Panc1 (cell line): ENCODE measurements at regions of chr5 and their contacts with region 1.

Region 1: DNA sequence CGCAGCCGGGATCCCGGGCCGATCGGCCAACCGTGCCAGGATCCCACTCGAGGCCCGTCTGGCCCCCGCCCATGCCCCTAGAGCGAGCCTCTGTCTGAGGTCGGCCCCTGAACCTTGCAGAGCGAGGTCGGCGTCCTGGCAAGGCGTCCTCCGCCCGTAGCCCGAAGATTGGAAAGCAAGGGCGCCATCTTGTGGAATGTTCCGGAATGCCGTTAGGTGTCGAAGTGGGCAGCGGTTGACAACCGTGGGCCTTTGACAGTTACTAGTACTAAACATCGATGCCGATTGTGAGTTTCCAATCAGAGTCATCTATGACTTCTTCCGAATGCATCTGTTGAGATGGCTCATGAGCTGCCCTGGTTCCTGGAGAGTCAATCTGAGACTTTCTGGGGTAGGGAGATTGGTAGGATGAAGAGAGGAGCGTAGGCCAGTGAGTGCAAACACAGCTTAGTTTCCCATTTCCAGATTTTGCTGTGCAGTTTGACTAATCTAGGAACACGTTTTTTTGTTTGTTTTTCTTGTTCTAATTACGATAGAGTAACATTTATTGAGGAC is 923 bp upstream of the PLK2 start:
- DNase-seq: peak; percentile 72
- ATAC-seq: peak; percentile 72
- H3K4me3 ChIP-seq: peak overlapping the region; percentile 87 to 91
- H3K27ac ChIP-seq: peak overlapping the region; percentile 97
- H3K4me1 ChIP-seq: peaks cover 24% of the 10 kb centered on the region
- H3K27me3 ChIP-seq: no peaks in the 10 kb centered on the region
- CTCF ChIP-seq: peak; percentile 84

Region 2: GRCh38 chr5:57298295-57298984 is 1162.4 kb before region 1 on chr5:
- CTCF ChIA-PET with region 1: no interaction called
- POLR2A ChIA-PET with region 1: no interaction called
- in situ Hi-C with region 1: no loop called
- intact Hi-C with region 1: loop called (anchors 1 kb)
- DNase-seq: peak; percentile 77
- ATAC-seq: peak; percentile 93
- H3K4me3 ChIP-seq: no peak overlapping the region
- H3K27ac ChIP-seq: peak overlapping the region; percentile 89
- H3K4me1 ChIP-seq: peaks cover 5% of the 10 kb centered on the region
- H3K27me3 ChIP-seq: no peaks in the 10 kb centered on the region
- CTCF ChIP-seq: peak; percentile 86

Region 3: DNA sequence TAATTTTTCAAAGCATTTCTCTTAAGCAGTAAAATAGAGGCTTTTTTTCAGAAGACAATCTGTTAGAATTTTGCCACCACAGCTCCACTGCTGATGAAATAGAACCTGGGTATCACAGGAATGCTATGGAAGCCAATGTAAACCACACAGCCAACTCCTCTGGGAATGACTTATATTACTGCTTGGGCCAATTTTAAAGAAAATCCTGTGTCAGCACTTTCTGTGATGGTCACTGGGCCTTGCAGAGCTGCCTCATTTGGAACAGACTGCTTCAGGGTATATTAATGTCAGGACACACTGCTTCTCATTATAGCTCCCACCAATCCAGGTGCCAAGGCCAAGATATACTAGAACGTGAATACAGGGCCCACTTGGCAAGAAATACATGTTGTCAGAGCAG is 834.1 kb before region 1 on chr5:
- CTCF ChIA-PET with region 1: no interaction called
- POLR2A ChIA-PET with region 1: no interaction called
- in situ Hi-C with region 1: no loop called
- intact Hi-C with region 1: no loop called
- DNase-seq: no peak
- ATAC-seq: no peak
- H3K4me3 ChIP-seq: no peak overlapping the region
- H3K27ac ChIP-seq: no peak overlapping the region
- H3K4me1 ChIP-seq: no peaks in the 10 kb centered on the region
- H3K27me3 ChIP-seq: no peaks in the 10 kb centered on the region
- CTCF ChIP-seq: no peak

Region 4: GRCh38 chr5:57692582-57693487 is 768.0 kb before region 1 on chr5:
- CTCF ChIA-PET with region 1: no interaction called
- POLR2A ChIA-PET with region 1: no interaction called
- in situ Hi-C with region 1: no loop called
- intact Hi-C with region 1: loop called (anchors 10 kb)
- DNase-seq: peak; percentile 95
- ATAC-seq: peak; percentile 99
- H3K4me3 ChIP-seq: peak overlapping the region; percentile 32 to 50
- H3K27ac ChIP-seq: peak overlapping the region; percentile 100
- H3K4me1 ChIP-seq: peaks cover 43% of the 10 kb centered on the region
- H3K27me3 ChIP-seq: no peaks in the 10 kb centered on the region
- CTCF ChIP-seq: no peak

Region 5: DNA sequence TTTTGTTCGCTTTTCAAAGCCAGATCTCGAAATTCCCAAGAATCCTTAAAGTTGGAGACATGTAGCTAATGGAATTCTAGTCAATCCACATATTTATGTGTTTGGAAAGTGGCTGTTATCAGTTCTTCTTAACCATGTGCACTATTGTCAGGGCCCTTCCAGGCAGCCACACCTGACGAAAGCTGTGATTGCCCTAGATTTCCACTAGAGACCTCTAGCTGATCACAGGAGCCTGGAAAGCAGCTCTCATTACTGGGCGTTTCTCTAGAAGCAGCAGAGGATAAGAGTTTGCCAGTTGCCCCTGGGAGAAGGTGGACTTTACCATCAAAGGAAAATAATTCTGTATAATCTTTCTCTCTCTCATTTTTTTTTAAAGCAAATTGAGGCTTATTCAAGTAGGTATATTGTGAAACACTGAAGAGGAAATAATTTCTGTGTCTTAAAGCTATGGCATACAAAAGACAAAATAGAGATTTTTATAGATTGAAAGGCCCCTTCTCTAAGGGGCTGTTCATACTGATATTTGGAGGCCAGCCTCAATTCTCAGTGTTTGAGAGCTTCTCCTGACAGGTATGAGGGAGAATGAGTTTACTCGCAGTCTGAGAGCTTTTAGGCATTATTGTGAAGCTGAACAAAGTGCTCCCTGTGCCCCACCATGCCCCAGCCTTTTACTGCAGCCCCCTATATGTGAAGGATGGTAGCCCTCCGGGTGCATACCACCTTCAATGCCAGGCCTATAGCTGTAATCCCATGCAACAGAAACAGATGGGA is 572.8 kb before region 1 on chr5:
- CTCF ChIA-PET with region 1: interaction called, 10 read pairs
- POLR2A ChIA-PET with region 1: interaction called, 5 read pairs
- in situ Hi-C with region 1: no loop called
- intact Hi-C with region 1: loop called (anchors 1 kb)
- DNase-seq: peak; percentile 27
- ATAC-seq: peak; percentile 89
- H3K4me3 ChIP-seq: no peak overlapping the region
- H3K27ac ChIP-seq: peak overlapping the region; percentile 95
- H3K4me1 ChIP-seq: peaks cover 31% of the 10 kb centered on the region
- H3K27me3 ChIP-seq: no peaks in the 10 kb centered on the region
- CTCF ChIP-seq: peak; percentile 90

Region 6: DNA sequence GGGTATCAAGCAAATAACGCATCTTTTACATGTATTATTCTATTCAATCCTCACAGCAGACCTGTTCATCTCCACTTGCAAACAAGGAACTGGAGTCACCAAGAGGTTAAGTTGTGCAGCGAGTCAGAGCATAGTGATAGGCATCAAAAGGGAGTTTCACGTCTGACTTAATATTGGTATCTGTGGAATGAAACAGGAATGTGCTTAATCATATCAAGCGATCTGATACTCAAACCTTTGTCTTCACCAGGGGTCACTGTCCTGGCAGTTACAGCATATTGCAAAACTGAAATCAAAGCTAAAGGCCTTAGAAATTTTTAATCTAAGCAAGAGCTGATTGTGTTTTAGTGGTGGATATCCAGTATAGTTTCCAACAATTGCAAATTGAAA is 272.6 kb before region 1 on chr5:
- CTCF ChIA-PET with region 1: no interaction called
- POLR2A ChIA-PET with region 1: no interaction called
- in situ Hi-C with region 1: no loop called
- intact Hi-C with region 1: loop called (anchors 5 kb)
- DNase-seq: peak; percentile 73
- ATAC-seq: peak; percentile 96
- H3K4me3 ChIP-seq: peak overlapping the region in 1 of 2 experiments; percentile 31; a peak in 2 of 4 replicates
- H3K27ac ChIP-seq: peak overlapping the region; percentile 100
- H3K4me1 ChIP-seq: peaks cover 57% of the 10 kb centered on the region
- H3K27me3 ChIP-seq: no peaks in the 10 kb centered on the region
- CTCF ChIP-seq: peak; percentile 26; the same call in 1 of the 2 replicates

Region 7: DNA sequence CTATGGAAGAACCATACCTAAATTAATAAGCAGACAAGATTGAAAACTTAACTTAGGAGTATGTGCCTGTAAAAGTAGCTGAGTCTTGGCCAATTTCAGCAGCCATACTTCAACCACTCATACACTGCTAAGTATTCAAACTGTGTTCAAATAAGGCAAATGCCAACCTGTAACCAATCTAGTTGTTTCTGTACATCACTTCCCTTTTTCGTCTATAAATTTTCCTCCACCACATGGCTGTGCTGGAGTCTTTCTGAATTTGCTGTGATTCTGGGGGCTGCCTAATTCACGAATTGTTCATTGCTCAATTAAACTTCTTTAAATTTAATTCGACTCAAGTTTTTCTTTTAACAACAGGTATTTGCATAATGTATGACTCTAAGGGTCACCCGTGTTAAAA is 185.3 kb before region 1 on chr5:
- CTCF ChIA-PET with region 1: no interaction called
- POLR2A ChIA-PET with region 1: no interaction called
- in situ Hi-C with region 1: no loop called
- intact Hi-C with region 1: no loop called
- DNase-seq: no peak
- ATAC-seq: no peak
- H3K4me3 ChIP-seq: no peak overlapping the region
- H3K27ac ChIP-seq: no peak overlapping the region
- H3K4me1 ChIP-seq: no peaks in the 10 kb centered on the region
- H3K27me3 ChIP-seq: no peaks in the 10 kb centered on the region
- CTCF ChIP-seq: no peak

Region 8: GRCh38 chr5:58286741-58287140 is 174.1 kb before region 1 on chr5:
- CTCF ChIA-PET with region 1: no interaction called
- POLR2A ChIA-PET with region 1: no interaction called
- in situ Hi-C with region 1: no loop called
- intact Hi-C with region 1: no loop called
- DNase-seq: no peak
- ATAC-seq: no peak
- H3K4me3 ChIP-seq: no peak overlapping the region
- H3K27ac ChIP-seq: 0 out of 2 replicates have a peak overlapping the region, but pooled peaks have one; percentile 3
- H3K4me1 ChIP-seq: no peaks in the 10 kb centered on the region
- H3K27me3 ChIP-seq: no peaks in the 10 kb centered on the region
- CTCF ChIP-seq: no peak

Region 9: GRCh38 chr5:58322453-58322852 is 138.4 kb before region 1 on chr5:
- CTCF ChIA-PET with region 1: no interaction called
- POLR2A ChIA-PET with region 1: no interaction called
- in situ Hi-C with region 1: no loop called
- intact Hi-C with region 1: loop called (anchors 10 kb)
- DNase-seq: no peak
- ATAC-seq: no peak
- H3K4me3 ChIP-seq: no peak overlapping the region
- H3K27ac ChIP-seq: peak overlapping the region; percentile 5; the same call in 1 of the 2 replicates
- H3K4me1 ChIP-seq: no peaks in the 10 kb centered on the region
- H3K27me3 ChIP-seq: no peaks in the 10 kb centered on the region
- CTCF ChIP-seq: no peak